ENCODE measurements at regions of chr5 and their contacts with region 1.

Region 1: DNA sequence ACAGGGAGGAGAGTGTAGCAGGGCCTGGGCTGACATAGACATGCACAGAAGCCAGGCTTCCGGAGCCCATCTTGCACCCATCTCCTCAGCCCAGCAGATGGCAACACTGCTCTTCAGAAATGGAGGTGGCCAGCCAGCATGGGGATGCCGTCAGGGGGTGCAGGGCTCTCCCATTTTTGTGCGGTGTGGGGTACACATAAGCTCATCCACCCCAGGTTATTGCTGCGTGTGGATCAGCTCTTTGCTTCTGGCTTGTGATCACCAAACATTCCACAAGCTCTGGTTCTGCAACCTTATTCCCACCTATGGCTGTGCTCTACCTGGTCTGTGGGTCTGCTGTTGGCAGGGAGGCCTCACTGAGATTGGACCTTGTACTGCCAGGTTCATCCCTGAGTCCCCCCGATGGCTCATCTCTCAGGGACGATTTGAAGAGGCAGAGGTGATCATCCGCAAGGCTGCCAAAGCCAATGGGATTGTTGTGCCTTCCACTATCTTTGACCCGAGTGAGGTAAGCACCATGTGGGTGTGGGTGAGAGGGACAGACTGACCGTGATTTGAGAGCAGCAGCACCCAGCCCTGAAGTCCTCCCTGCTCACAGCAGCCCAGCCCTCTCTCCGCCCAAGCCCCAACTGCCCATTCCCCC is 17.3 kb downstream of the SLC22A5 start:
- DNase-seq: peak; percentile 71
- ATAC-seq: peak; percentile 68
- H3K4me3 ChIP-seq: no peak overlapping the region
- H3K27ac ChIP-seq: peak overlapping the region; percentile 79
- H3K4me1 ChIP-seq: peaks cover 33% of the 10 kb centered on the region
- H3K27me3 ChIP-seq: no peaks in the 10 kb centered on the region
- CTCF ChIP-seq: peak; percentile 93
- POLR2A ChIP-seq: 0 out of 2 replicates have a peak, but pooled peaks have one; percentile 36
- RAD21 ChIP-seq: peak; percentile 96

Region 2: DNA sequence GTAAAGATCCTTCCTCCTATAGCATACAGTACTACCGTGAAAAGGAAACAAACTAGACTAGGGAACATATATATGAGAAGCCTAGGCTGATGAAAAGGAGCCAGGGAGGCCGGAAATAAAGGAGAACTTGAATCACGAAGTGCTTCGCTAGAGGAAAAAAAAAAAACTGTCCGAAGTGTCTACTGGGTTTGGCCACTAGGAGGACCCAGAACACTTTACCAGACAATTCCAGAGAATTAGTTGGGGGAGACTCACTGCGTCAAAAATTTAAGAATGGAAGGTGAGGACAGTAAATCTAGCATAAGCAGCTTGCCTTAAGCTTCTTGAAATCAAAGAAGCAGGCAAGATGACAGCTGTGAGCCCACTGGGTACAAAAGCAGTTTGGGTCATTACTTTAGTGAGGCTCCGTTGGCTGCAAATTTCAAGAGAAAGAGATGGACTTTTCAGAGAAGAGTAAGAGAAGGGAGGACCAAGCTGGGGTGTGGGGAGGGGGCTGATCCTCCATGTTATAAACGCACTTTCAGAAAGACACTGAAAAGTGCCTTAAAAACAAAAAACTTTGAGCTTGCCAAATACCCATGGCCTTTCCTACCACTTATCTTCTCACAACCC is 206.5 kb before region 1 on chr5:
- CTCF ChIA-PET with region 1: no interaction called
- POLR2A ChIA-PET with region 1: no interaction called
- dilution Hi-C with region 1: no loop called
- in situ Hi-C with region 1: no loop called
- intact Hi-C with region 1: loop called (anchors 5 kb)
- DNase-seq: peak; percentile 74
- ATAC-seq: peak; percentile 75
- H3K4me3 ChIP-seq: no peak overlapping the region
- H3K27ac ChIP-seq: no peak overlapping the region
- H3K4me1 ChIP-seq: peaks cover 2% of the 10 kb centered on the region; the same call in 1 of the 2 replicates
- H3K27me3 ChIP-seq: no peaks in the 10 kb centered on the region
- CTCF ChIP-seq: peak; percentile 88
- POLR2A ChIP-seq: no peak
- RAD21 ChIP-seq: peak; percentile 72

Region 3: DNA sequence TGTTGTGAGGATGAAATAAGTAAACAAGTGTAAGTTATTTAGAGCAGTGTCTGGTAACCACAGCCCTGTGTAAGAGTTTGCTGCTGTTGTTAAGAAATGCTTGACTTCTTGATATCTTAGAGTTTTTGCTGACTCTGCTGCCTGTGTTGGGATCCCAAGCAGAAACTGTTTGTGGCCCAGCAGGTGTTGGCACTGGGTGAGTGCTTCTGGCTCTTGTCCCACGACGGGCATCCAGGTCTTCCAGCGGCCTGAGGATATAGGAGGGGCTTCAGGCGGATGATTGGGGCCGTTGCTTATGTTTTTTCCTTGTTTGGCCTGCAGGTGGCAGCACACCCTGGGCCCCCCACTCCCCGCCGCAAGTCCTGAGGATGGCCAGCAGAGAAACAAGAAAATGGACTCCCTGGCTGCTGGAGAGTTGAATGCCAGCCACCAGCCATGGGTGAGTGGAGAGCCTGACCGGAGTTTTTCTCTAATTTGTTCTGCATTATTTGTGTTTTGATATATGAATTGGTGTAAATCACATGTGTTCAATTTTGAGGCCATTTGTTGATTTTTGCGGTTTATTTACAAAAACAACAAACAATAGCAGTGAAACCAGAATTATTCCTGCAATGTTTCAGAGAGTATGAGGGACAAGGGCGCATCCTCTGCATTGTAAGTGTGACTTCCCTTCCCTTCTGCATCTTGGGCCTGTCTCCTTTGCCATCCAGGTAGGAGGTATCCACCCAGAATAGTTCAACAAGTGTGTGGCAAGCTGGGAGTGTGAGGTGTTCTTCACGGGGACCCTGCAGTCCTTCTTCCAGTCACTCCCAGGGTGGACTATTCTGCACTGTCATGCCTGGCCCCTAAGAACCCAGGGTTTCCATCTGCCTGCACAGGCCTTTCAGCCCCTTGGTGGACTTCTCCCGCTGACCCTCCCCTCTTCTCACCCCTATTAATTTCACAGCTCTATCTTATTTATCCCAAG is 33.0 kb after region 1 on chr5:
- CTCF ChIA-PET with region 1: no interaction called
- POLR2A ChIA-PET with region 1: no interaction called
- dilution Hi-C with region 1: no loop called
- in situ Hi-C with region 1: no loop called
- intact Hi-C with region 1: loop called (anchors 2 kb)
- DNase-seq: peak; percentile 72
- ATAC-seq: peak; percentile 85
- H3K4me3 ChIP-seq: no peak overlapping the region
- H3K27ac ChIP-seq: peak overlapping the region; percentile 31; the same call in 1 of the 2 replicates
- H3K4me1 ChIP-seq: peaks cover 26% of the 10 kb centered on the region
- H3K27me3 ChIP-seq: no peaks in the 10 kb centered on the region
- CTCF ChIP-seq: peak; percentile 90
- POLR2A ChIP-seq: 0 out of 2 replicates have a peak, but pooled peaks have one; percentile 30
- RAD21 ChIP-seq: peak; percentile 91

Region 4: GRCh38 chr5:132506094-132506692 is 119.4 kb after region 1 on chr5:
- CTCF ChIA-PET with region 1: interaction called, 30 read pairs
- POLR2A ChIA-PET with region 1: no interaction called
- dilution Hi-C with region 1: no loop called
- in situ Hi-C with region 1: loop called (anchors 5 kb)
- intact Hi-C with region 1: loop called (anchors 1 kb)
- DNase-seq: peak; percentile 98
- ATAC-seq: peak; percentile 91
- H3K4me3 ChIP-seq: no peak overlapping the region
- H3K27ac ChIP-seq: peak overlapping the region; percentile 99
- H3K4me1 ChIP-seq: peaks cover 26% of the 10 kb centered on the region
- H3K27me3 ChIP-seq: no peaks in the 10 kb centered on the region
- CTCF ChIP-seq: peak; percentile 85
- POLR2A ChIP-seq: no peak
- RAD21 ChIP-seq: peak; percentile 65

Region 5: DNA sequence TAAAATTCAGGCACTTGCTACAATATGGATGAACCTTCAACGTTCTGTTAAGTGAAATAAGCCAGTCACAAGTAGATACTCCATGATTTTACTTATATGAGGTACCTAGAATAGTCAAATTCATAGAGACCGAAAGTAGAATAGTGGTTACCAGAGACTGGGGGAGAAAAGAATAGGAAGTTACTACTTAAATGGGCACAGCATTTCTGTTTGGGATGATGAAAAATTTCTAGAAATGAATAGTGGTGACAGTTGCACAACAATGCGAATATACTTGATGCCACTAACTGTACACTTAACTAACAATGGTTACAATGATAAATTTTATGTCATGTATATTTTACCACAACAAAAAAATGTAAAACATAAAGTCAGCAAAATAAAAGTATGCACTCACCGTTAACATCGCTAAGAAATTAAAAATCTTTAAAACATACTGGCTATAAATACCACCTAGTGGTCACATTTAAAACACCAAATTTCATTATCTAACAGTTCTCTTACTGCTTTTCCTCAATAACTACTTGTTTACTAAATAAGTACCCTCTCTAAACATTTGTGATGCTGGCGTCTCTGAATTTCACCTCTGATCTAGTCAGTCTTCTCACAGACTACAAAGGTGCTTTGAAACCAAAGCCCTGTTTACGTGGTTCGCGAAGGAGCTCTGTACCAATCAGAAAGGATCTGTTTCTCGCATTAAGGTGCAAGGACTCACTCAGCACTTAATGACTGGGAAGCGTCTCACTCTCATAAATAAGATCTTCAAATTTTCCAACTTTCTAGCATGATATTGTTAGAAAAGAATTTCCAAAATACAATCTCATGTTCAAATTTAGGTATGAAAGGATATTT is 327.9 kb after region 1 on chr5:
- CTCF ChIA-PET with region 1: no interaction called
- POLR2A ChIA-PET with region 1: no interaction called
- dilution Hi-C with region 1: no loop called
- in situ Hi-C with region 1: loop called (anchors 10 kb)
- intact Hi-C with region 1: loop called (anchors 2 kb)
- DNase-seq: peak; percentile 15
- ATAC-seq: peak; percentile 60; the same call in 1 of the 2 replicates
- H3K4me3 ChIP-seq: no peak overlapping the region
- H3K27ac ChIP-seq: no peak overlapping the region
- H3K4me1 ChIP-seq: no peaks in the 10 kb centered on the region
- H3K27me3 ChIP-seq: no peaks in the 10 kb centered on the region
- CTCF ChIP-seq: peak; percentile 48
- POLR2A ChIP-seq: no peak
- RAD21 ChIP-seq: peak; percentile 43

Region 6: GRCh38 chr5:132866342-132867045 is 479.7 kb after region 1 on chr5 and contains the starts of genes GDF9 and UQCRQ:
- CTCF ChIA-PET with region 1: no interaction called
- POLR2A ChIA-PET with region 1: no interaction called
- dilution Hi-C with region 1: no loop called
- in situ Hi-C with region 1: no loop called
- intact Hi-C with region 1: loop called (anchors 1 kb)
- DNase-seq: peak; percentile 100
- ATAC-seq: peak; percentile 99
- H3K4me3 ChIP-seq: peak within 1 kb of the TSS; percentile 81
- H3K27ac ChIP-seq: peak within 1 kb of the TSS; percentile 73
- H3K4me1 ChIP-seq: peaks cover 3% of the 10 kb centered on the region; the same call in 1 of the 2 replicates
- H3K27me3 ChIP-seq: no peaks in the 10 kb centered on the region
- CTCF ChIP-seq: peak; percentile 46
- POLR2A ChIP-seq: peak; percentile 95
- RAD21 ChIP-seq: peak; percentile 52
- total RNA-seq, gene GDF9: 0.18 and 0.28 TPM in 2 replicates
- total RNA-seq, gene UQCRQ: 69.7 and 73.7 TPM in 2 replicates

Region 7: DNA sequence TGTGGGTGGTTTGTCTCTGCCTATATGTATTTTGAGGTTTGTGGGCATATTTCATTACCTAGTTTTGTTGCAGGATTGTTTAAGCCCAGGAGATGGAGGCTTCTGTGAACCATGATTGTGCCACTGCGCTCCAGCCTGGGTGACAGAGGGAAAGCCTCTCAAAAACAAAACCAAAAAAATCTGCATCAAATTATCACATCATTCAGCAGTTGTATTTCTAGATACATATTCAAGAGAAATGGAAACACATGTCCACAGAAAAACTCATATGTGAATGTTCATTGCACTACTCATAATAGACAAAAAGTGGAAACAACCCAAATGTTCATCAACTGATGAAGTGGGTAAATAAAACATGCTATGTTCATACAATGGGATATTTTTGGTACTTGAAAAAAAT is 694.9 kb after region 1 on chr5:
- CTCF ChIA-PET with region 1: no interaction called
- POLR2A ChIA-PET with region 1: no interaction called
- dilution Hi-C with region 1: no loop called
- in situ Hi-C with region 1: no loop called
- intact Hi-C with region 1: loop called (anchors 10 kb)
- DNase-seq: no peak
- ATAC-seq: 0 out of 2 replicates have a peak, but pooled peaks have one; percentile 6
- H3K4me3 ChIP-seq: no peak overlapping the region
- H3K27ac ChIP-seq: no peak overlapping the region
- H3K4me1 ChIP-seq: peaks cover 9% of the 10 kb centered on the region
- H3K27me3 ChIP-seq: no peaks in the 10 kb centered on the region
- CTCF ChIP-seq: no peak
- POLR2A ChIP-seq: no peak
- RAD21 ChIP-seq: no peak

Measured in IMR-90 (cell line).